Activated CD4-positive, alpha-beta memory T cell treated with anti-CD3 and anti-CD28 coated beads, Interleukin-2, amount 10 ng/mL, durations not matched to agents 7 days and 5 days (primary cell): ENCODE measurements at regions of chr9 and their contacts with region 1.

Region 1: GRCh38 chr9:133362359-133363044 is 6.2 kb downstream of the SURF2 start:
- DNase-seq: no peak
- H3K4me3 Mint-ChIP-seq: no peak overlapping the region
- H3K27ac Mint-ChIP-seq: no peak overlapping the region
- H3K4me1 Mint-ChIP-seq: peaks cover 40% of the 10 kb centered on the region
- H3K27me3 Mint-ChIP-seq: no peaks in the 10 kb centered on the region

Region 2: DNA sequence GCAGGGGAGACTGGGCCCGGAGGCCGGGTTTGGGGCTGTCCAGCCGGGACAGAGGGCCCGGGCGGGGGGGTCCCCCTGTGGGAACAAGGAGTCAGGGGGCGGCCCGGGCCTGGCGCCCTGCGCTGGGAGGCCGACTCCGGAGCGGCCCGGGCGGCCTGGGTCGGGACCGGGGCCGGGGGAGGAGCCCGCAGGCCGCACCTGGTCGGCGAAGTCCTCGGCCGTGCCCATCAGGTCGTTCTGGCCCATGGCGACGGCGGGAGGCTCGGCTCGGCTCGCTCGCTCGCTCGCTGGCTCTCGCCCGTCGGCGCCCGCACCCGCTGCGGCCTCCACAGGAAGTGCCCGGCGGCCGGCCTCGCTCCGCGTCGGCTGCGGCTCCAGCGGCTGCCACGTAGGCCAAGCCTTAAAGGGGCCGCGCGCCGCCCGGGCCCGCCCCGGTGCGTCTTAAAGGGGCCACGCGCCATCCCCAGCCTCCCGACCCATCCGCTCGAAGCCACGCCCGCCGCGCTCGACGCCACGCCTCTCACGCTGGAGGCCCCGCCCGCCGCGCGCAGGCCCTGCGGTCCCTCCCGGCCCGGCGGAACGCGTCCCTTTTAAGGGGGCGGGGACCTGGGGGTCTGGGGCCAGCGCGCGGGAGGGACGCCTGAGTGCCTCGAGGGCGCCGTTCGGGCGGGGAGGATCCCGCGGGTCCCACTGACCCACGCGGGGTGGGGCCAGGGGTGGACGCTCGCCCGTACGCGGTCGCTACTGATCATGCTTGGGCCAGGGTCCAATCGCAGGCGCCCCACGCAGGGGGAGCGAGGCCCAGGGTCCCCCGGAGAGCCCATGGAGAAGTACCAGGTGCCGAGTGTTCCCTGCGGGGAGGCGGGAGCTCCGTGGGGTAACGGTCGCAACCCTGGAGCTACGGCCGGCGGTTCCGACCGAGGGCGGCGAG is 13.5 kb after region 1 on chr9 and contains the starts of genes STKLD1 and SURF4:
- CTCF ChIA-PET with region 1: interaction called, 59 read pairs
- POLR2A ChIA-PET with region 1: interaction called, 277 read pairs
- DNase-seq: peak; percentile 96
- H3K4me3 Mint-ChIP-seq: peak within 1 kb of the TSS; percentile 83
- H3K27ac Mint-ChIP-seq: peak within 1 kb of the TSS; percentile 97
- H3K4me1 Mint-ChIP-seq: peaks cover 36% of the 10 kb centered on the region
- H3K27me3 Mint-ChIP-seq: peaks cover 2% of the 10 kb centered on the region
- total RNA-seq, gene STKLD1: 0.65 to 0.71 TPM
- total RNA-seq, gene SURF4: 249 to 260 TPM

Region 3: DNA sequence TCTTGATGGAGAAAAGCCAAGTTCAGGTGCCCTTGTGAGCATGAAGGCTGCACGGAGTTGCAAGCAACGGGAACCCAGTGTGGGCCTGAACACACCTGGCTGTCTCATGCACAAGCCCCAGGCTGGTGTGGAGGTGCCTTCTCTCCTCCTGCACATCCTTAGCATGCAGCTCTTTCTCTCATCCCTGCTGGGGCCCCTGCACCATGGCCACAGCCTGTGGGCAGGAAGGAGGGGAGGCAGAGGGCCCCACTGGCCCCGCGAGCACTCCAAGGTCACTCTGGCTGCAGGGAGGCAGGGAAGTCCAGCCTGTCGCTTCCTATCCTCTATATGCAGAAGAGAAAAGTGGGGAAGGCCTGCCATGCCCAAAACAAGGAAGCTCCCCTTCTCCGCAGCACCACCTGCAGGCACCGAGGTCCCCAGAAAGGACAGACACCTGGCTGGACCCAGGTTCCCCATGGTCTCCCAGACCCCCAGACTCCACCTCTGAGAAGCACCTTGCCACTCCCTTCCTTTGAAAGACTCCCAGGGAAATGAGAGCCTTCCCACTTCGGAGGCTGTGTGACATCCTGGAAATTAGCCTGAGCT is 32.3 kb after region 1 on chr9:
- CTCF ChIA-PET with region 1: no interaction called
- POLR2A ChIA-PET with region 1: no interaction called
- DNase-seq: no peak
- H3K4me3 Mint-ChIP-seq: no peak overlapping the region
- H3K27ac Mint-ChIP-seq: no peak overlapping the region
- H3K4me1 Mint-ChIP-seq: no peaks in the 10 kb centered on the region
- H3K27me3 Mint-ChIP-seq: peaks cover 3% of the 10 kb centered on the region